HCT116 (cell line): ENCODE measurements at regions of chr3 and their contacts with region 1.

Region 1: DNA sequence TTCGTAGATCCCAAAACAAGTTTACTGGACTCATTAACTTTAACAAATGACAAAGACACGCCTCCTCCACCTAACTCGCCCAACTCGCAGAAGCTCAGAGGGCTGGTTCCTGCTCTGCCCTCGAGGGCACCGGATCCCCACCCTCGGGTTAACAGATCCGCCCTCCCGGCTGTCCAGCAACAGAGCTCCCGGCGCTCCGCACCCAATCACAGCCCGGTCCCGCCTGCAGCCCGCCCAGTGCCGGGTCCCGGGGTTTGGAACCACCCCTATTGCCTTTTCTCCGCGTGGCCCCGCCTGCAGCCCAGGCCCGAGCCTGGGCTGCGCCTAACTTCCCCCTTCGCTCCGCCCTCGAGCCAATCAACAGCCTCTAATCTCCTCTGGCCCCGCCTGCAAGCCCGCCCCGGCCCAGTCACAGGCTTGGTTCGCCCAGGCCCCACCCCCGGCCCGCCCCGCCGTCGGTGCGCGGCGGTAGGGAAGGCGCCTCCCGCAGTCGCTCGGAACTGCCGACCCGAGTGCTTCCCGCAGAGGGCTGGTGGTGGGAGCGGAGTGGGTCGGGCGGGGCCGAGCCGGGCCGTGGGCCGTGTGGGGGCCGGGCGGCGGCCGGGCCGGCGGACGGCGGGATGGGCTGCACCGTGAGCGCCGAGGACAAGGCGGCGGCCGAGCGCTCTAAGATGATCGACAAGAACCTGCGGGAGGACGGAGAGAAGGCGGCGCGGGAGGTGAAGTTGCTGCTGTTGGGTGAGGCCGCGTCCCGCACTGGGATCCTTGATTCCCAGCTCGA is at the start of gene GNAI2:
- DNase-seq: peak; percentile 93
- ATAC-seq: peak; percentile 92
- H3K4me3 ChIP-seq: peak within 1 kb of the TSS; percentile 80 to 89
- H3K27ac ChIP-seq: peak within 1 kb of the TSS; percentile 81
- H3K4me1 ChIP-seq: peaks cover 43 to 55% of the 10 kb centered on the region in 2 experiments
- H3K27me3 ChIP-seq: no peaks in the 10 kb centered on the region
- CTCF ChIP-seq: no peak
- POLR2A ChIP-seq: peak; percentile 88
- RAD21 ChIP-seq: no peak
- total RNA-seq, gene GNAI2: 170 TPM

Region 2: DNA sequence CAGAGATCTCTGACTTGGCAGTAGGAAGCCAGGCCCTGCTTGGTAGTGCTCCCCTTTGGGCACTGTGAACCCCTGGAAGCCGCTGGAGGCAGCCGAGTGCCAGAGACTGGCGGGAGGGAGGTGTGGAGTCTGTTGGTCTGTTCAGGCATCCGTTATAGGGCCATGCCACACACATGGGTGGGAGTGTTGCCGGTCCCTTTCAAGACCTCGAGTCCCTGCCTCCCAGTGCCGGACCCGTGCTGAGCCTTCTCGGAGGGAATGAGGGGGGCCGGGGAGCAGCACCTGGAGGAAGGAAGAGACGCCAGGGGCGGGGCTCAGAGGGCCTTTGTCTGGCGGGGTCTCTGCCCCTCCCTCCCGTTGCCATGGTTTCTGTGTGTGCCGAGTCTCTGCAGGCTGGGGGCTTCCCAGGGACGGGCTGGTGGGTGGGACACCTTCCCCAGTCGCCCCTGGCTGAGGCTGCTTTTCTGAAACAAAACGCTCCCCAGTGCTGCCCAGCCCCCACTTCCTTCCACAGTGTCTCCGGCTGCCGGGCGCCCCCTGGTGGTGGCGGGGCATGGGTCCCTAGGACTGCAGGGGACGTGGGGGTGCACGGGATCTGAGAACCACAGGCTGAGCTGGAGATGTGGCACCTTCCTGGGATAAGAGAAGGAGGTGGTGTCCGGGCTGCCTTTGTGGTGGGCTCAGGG is 10.1 kb after region 1 on chr3:
- CTCF ChIA-PET with region 1: interaction called, 26 read pairs
- POLR2A ChIA-PET with region 1: interaction called, 34 read pairs
- RAD21 ChIA-PET with region 1: interaction called in 1 of 2 experiments, 7 read pairs
- intact Hi-C with region 1: loop called (anchors 1 kb)
- DNase-seq: no peak
- ATAC-seq: peak; percentile 87
- H3K4me3 ChIP-seq: peak overlapping the region; percentile 50 to 59
- H3K27ac ChIP-seq: peak overlapping the region; percentile 86
- H3K4me1 ChIP-seq: peaks cover 38 to 75% of the 10 kb centered on the region in 2 experiments
- H3K27me3 ChIP-seq: no peaks in the 10 kb centered on the region
- CTCF ChIP-seq: peak in 2 of 3 experiments; percentile 99; a peak in 4 of 6 replicates
- POLR2A ChIP-seq: no peak
- RAD21 ChIP-seq: no peak

Region 3: DNA sequence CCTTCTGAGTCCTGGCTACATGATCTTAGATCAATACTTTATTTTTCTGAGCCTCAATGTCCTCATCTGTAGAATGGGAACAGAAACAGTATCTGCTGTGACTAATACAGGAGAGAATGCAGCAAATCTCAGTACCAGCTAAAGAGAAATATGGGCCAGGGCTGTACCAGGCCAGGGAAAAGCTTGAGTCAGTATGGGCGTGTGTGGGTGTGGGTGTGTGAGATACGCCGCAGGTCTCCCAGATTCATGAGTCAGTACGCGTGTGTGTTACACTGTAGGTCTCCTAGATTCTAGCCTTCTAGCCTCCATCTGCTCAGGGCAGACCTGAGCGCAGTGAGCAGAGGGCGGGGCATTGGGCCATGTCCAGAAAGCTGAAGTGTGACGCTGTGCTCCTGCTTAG is 15.3 kb after region 1 on chr3:
- CTCF ChIA-PET with region 1: interaction called, 26 read pairs
- POLR2A ChIA-PET with region 1: interaction called, 34 read pairs
- RAD21 ChIA-PET with region 1: interaction called in 1 of 2 experiments, 7 read pairs
- intact Hi-C with region 1: loop called (anchors 1 kb)
- DNase-seq: no peak
- ATAC-seq: peak; percentile 47
- H3K4me3 ChIP-seq: no peak overlapping the region
- H3K27ac ChIP-seq: no peak overlapping the region
- H3K4me1 ChIP-seq: peaks cover 24 to 80% of the 10 kb centered on the region in 2 experiments
- H3K27me3 ChIP-seq: no peaks in the 10 kb centered on the region
- CTCF ChIP-seq: no peak
- POLR2A ChIP-seq: no peak
- RAD21 ChIP-seq: no peak